ENCODE measurements at regions of chr2 and their contacts with region 1.

Region 1: GRCh38 chr2:61993444-61994024 is 88.1 kb downstream of the COMMD1 start:
- DNase-seq: peak; percentile 26 to 53
- H3K4me3 ChIP-seq: no peak overlapping the region
- H3K27ac ChIP-seq: no peak overlapping the region
- H3K4me1 ChIP-seq: no peaks in the 10 kb centered on the region
- H3K27me3 ChIP-seq: no peaks in the 10 kb centered on the region
- CTCF ChIP-seq: peak; percentile 91

Region 2: GRCh38 chr2:61910603-61911002 is 82.9 kb before region 1 on chr2:
- CTCF ChIA-PET with region 1: no interaction called
- POLR2A ChIA-PET with region 1: no interaction called
- intact Hi-C with region 1: loop called (anchors 5 kb)
- DNase-seq: peak in 1 of 2 experiments; percentile 17
- H3K4me3 ChIP-seq: no peak overlapping the region
- H3K27ac ChIP-seq: no peak overlapping the region
- H3K4me1 ChIP-seq: peaks cover 13% of the 10 kb centered on the region; the same call in 1 of the 2 replicates
- H3K27me3 ChIP-seq: no peaks in the 10 kb centered on the region
- CTCF ChIP-seq: peak; percentile 57

Region 3: DNA sequence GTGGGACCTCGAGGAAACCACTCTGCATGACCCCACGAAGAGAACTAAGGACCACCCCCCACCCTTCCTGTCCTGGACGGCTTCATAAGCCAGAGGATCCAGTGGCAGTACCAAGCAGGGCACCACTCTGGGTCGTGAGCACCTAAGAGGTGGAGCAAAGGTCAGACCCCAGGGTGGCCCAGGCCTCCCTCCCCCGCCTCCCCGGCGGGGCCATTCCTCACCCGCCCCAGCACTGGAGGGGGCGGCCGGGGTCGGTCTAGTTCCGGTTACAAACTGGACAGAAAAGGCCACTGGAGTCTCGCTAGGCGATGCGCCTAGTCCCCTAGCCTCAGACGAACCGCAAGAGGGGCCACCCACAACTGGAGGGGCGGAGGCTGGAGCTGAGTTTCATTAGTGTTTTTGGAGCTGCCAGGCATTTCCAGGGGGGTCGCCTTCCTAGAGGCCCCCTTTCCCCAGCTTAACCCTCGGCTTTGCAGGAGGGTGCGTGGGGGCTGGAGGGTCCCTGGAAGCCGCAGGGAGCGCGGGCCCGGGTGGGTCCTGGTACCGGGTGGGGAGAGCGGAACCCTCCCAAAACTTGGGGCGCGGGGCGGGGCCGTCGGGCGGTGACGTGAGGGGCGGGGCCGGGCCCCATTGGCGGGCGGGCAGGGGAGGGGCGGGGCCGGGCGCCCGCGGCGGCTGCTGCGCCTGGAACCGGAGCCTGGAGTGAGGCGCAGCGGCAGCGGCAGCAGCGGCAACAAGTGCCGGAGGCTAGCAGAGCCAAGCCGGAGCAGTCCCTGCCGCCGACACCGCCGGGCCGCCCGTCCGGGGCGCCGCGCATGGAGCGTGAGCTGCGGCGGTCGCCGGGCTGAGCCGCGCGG is 202.1 kb after region 1 on chr2 and contains the start of gene B3GNT2:
- CTCF ChIA-PET with region 1: no interaction called
- POLR2A ChIA-PET with region 1: no interaction called
- intact Hi-C with region 1: loop called (anchors 5 kb)
- DNase-seq: peak; percentile 56 to 82
- H3K4me3 ChIP-seq: peak within 1 kb of the TSS; percentile 98
- H3K27ac ChIP-seq: peak within 1 kb of the TSS; percentile 70
- H3K4me1 ChIP-seq: peaks cover 29% of the 10 kb centered on the region
- H3K27me3 ChIP-seq: no peaks in the 10 kb centered on the region
- CTCF ChIP-seq: no peak
- total RNA-seq, gene B3GNT2: 30.8 and 30.9 TPM in 2 replicates

Region 4: DNA sequence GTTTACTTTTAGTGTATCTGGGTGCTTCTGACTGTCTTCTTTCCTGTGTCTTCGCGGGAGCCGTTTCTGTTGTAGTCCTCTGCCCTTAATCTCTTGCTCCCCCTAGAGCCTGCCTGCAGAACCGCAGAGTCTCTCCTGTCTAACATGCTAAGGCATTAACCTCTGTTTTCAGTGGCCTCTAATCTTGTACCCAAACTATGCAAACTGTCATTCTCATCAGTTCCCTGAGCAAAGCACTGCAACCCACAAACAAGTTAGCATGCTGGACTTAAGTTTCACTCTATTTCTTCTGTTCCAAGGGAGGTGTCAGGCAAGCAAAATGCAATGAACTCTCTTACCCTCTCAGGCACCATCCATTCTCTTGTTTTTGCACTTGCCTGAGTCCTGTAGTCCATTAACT is 1195.5 kb after region 1 on chr2:
- CTCF ChIA-PET with region 1: no interaction called
- POLR2A ChIA-PET with region 1: no interaction called
- intact Hi-C with region 1: loop called (anchors 5 kb)
- DNase-seq: peak; percentile 33 to 47
- H3K4me3 ChIP-seq: peak overlapping the region; percentile 10; the same call in 1 of the 2 replicates
- H3K27ac ChIP-seq: no peak overlapping the region
- H3K4me1 ChIP-seq: no peaks in the 10 kb centered on the region
- H3K27me3 ChIP-seq: no peaks in the 10 kb centered on the region
- CTCF ChIP-seq: peak; percentile 94

Measured in PC-9 (cell line).